ENCODE measurements at regions of chr2 and their contacts with region 1.

Region 1: GRCh38 chr2:201071479-201072200 is at the starts of genes HYCC2 and NDUFB3:
- DNase-seq: peak; percentile 95
- H3K4me3 ChIP-seq: peak within 1 kb of the TSS; percentile 76
- H3K27ac ChIP-seq: peak within 1 kb of the TSS; percentile 90
- H3K4me1 ChIP-seq: peaks cover 22% of the 10 kb centered on the region
- H3K27me3 ChIP-seq: no peaks in the 10 kb centered on the region
- CTCF ChIP-seq: peak; percentile 34
- total RNA-seq, gene HYCC2: 15.5 and 18.4 TPM in 2 replicates
- total RNA-seq, gene NDUFB3: 119 and 120 TPM in 2 replicates

Region 2: DNA sequence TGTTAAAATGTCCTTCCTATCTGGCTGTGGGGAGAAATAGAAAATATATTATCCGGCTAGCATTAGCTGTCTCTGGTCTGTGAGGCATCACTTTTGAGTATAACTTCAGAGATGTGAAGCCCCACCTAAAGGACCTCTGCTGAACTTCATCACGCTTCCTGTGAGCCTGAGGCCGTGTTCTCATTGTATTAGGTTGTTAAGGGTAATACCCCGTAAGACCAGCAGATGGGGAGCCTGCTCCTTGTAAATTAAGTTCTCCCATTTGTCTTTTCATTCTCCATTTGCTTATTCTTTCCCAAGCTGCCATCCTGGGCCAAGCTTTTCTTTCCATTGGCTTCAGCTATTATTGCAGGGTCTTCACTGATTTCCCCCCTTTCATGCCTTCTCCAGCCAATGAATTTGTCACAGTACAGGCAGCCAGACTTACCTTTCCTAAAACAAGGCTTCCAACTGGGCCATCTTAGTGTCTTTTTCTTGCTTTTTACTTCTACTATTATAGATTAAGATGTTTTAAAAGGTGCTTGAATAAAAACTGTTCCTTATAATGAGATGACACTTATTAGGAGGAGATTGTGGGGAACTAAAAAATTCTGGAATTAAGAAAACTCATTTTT is 170.1 kb before region 1 on chr2:
- CTCF ChIA-PET with region 1: interaction called, 19 read pairs
- POLR2A ChIA-PET with region 1: interaction called, 5 read pairs
- intact Hi-C with region 1: loop called (anchors 1 kb)
- DNase-seq: peak; percentile 92
- H3K4me3 ChIP-seq: no peak overlapping the region
- H3K27ac ChIP-seq: no peak overlapping the region
- H3K4me1 ChIP-seq: no peaks in the 10 kb centered on the region
- H3K27me3 ChIP-seq: no peaks in the 10 kb centered on the region
- CTCF ChIP-seq: peak; percentile 72

Region 3: DNA sequence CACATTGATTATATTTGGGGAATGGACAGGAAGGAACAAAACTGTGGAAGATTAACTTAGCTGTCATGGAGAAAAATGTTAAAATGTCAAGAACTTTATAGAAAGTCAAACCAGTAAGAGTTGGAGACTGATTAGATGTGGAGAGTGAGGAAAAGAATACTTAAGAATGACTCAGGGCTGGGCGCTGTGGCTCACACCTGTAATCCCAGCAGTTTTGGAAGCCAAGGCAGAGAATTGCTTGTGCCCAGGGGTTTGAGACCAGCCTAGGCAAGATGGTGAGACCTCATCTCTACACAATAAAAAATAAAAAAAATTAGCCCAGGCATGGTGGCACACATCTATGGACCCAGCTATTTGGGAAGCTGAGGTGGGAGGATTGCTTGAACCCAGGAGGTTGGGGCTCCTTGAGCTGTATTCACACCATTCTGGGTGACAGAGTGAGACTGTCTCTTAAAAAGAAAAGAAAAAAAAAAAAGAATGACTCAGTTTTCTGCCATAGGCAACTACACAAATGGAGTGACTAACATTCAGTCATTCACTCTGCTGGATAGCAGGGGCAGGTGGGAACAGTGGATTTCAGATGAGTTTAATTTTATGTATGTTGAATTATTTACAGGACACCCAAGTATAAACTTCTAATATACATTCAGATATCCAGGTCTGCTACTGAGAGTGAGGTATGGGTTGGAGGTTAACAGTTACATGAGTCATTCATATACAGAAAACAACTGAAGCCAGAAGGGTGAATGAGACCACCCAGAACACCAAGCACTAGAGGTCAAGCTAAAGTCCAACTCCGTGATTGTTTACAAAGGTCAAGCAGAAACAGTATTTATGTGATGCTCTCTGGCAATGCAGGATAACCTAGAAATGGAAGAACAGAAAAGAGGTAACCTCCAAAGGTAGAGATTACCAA is 142.0 kb before region 1 on chr2:
- CTCF ChIA-PET with region 1: no interaction called
- POLR2A ChIA-PET with region 1: no interaction called
- intact Hi-C with region 1: no loop called
- DNase-seq: no peak
- H3K4me3 ChIP-seq: no peak overlapping the region
- H3K27ac ChIP-seq: no peak overlapping the region
- H3K4me1 ChIP-seq: no peaks in the 10 kb centered on the region
- H3K27me3 ChIP-seq: no peaks in the 10 kb centered on the region
- CTCF ChIP-seq: no peak

Region 4: DNA sequence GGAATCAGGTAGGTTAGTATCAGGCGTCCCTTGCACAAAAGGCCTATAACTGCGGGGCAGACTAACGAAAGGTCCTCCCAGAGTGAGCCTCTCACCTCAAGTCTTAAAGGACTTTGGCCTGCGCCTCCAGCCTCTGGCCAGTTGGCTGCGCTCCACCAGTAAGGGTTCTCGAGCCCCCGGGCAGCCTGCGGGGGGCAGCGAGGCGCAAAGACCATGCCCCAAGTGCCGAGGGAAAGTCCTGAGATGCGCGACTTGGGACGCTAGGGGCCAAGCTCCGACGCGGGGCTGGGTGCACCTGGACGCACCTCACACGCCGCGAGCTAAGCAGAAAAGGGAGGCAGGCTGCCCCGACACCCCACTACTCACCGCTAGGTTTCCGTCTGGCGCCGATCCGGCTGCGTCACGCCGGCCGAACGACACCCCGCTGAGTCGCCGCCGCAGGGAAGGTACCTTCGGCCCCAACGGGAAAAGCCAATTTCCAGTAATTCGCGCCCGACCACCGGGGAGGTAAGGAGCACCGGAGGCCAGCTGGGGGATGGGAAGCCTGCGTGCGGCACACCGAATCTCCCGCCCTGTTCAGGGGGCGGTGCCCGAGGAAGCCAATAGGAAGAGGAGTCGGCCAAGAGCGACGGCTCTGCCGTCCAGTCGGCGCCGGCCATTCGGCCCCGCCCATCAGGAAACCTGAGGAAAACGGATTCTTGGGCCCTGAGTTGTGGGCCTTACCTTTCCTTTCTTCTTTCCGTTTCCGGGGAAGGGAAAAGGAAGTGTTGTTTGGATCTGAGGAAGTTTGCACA is 108.3 kb before region 1 on chr2 and contains the start of gene ORC2:
- CTCF ChIA-PET with region 1: interaction called, 5 read pairs
- POLR2A ChIA-PET with region 1: no interaction called
- intact Hi-C with region 1: loop called (anchors 2 kb)
- DNase-seq: peak; percentile 96
- H3K4me3 ChIP-seq: peak within 1 kb of the TSS; percentile 76
- H3K27ac ChIP-seq: peak within 1 kb of the TSS; percentile 75
- H3K4me1 ChIP-seq: peaks cover 28% of the 10 kb centered on the region
- H3K27me3 ChIP-seq: no peaks in the 10 kb centered on the region
- CTCF ChIP-seq: peak; percentile 61
- total RNA-seq, gene ORC2: 48.6 and 56.0 TPM in 2 replicates

Region 5: GRCh38 chr2:201118121-201118960 is 46.7 kb after region 1 on chr2:
- CTCF ChIA-PET with region 1: interaction called, 5 read pairs
- POLR2A ChIA-PET with region 1: no interaction called
- intact Hi-C with region 1: loop called (anchors 5 kb)
- DNase-seq: peak; percentile 91
- H3K4me3 ChIP-seq: peak overlapping the region; percentile 76
- H3K27ac ChIP-seq: peak overlapping the region; percentile 98
- H3K4me1 ChIP-seq: peaks cover 23% of the 10 kb centered on the region
- H3K27me3 ChIP-seq: no peaks in the 10 kb centered on the region
- CTCF ChIP-seq: peak; percentile 59

Region 6: GRCh38 chr2:201158111-201158929 is 86.7 kb after region 1 on chr2:
- CTCF ChIA-PET with region 1: interaction called, 15 read pairs
- POLR2A ChIA-PET with region 1: no interaction called
- intact Hi-C with region 1: loop called (anchors 2 kb)
- DNase-seq: peak; percentile 88
- H3K4me3 ChIP-seq: no peak overlapping the region
- H3K27ac ChIP-seq: peak overlapping the region; percentile 41
- H3K4me1 ChIP-seq: peaks cover 8% of the 10 kb centered on the region
- H3K27me3 ChIP-seq: no peaks in the 10 kb centered on the region
- CTCF ChIP-seq: peak; percentile 80

Measured in A673 (cell line).